ENCODE measurements at regions of chr1 and their contacts with region 1.

Region 1: DNA sequence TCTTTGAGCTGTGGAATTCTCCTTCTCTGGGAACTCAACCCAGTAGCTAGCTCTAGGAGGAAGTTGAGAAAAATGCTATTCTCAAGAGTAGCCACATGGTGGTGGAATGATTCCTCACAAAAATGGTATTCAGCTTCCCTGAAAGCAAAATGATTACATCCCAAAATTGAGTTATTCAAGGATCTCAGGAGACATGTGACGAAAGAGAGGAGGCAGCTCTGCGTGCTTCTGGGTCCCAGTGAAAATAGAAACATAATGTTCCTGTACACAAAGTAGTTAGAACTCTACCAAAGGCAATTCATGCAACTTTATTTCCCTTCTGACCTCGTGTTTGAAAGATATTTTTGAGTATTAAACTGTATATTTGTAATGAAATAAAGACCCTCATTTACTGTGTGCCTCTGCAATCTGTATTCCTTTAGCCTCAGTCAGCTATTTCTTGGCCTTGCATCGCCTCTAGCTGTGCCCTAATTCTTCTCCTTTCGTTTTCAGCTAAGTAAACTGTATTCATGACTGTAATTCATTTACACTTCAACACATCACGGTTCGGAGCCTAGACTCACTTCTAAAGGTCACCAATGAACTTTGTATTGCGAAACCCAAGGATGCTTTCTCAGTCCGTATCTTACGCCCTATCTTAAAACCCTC is 167.3 kb downstream of the FASLG start:
- DNase-seq: peak in 1 of 2 donors; percentile 23
- ATAC-seq: peak in 7 of 8 donors; percentile 79 to 93 (median 85)
- H3K4me3 ChIP-seq: peak overlapping the region in 4 of 10 donors; percentile 13 to 32 (median 22)
- H3K27ac ChIP-seq: peak overlapping the region; percentile 9 to 66 (median 55)
- H3K4me1 ChIP-seq: peaks cover 0 to 33% (median 7%) of the 10 kb centered on the region in 9 donors
- H3K27me3 ChIP-seq: no peaks in the 10 kb centered on the region
- CTCF ChIP-seq: peak; percentile 36 to 77 (median 66)

Region 2: GRCh38 chr1:172745014-172745413 is 81.2 kb before region 1 on chr1:
- intact Hi-C with region 1: loop called in 2 of 10 experiments (anchors 5 to 10 kb)
- DNase-seq: peak in 1 of 2 donors; percentile 33
- ATAC-seq: peak in 7 of 8 donors; percentile 56 to 81 (median 77)
- H3K4me3 ChIP-seq: no peak overlapping the region
- H3K27ac ChIP-seq: no peak overlapping the region
- H3K4me1 ChIP-seq: peaks cover 0 to 26% (median 5%) of the 10 kb centered on the region in 9 donors
- H3K27me3 ChIP-seq: peaks cover 0 to 11% (median 0%) of the 10 kb centered on the region in 7 donors
- CTCF ChIP-seq: peak in 8 of 9 donors; percentile 20 to 73 (median 58)

Region 3: DNA sequence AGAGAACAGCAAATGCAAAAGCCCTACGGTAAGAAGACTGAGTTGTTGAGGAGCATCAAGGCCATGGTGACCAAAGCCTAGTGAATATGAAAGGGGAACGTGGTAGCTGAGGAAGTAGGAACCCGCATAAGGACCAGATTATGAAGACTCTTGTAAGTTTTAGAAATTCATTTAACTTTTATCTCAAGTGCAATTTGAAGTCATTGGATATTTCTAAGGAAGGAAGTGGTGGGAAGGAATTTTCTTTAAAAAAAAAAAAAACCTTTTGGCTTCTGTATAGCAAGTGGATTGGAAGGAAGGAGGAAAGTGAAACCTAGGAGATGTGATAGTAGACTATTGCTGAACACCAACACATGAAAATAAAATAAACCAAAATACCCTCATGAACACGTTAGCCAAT is 105.5 kb after region 1 on chr1:
- intact Hi-C with region 1: loop called in 1 of 10 experiments (anchors 5 kb)
- DNase-seq: no peak
- ATAC-seq: no peak
- H3K4me3 ChIP-seq: no peak overlapping the region
- H3K27ac ChIP-seq: no peak overlapping the region
- H3K4me1 ChIP-seq: peaks cover 0 to 42% (median 14%) of the 10 kb centered on the region in 9 donors
- H3K27me3 ChIP-seq: no peaks in the 10 kb centered on the region
- CTCF ChIP-seq: no peak

Region 4: GRCh38 chr1:173202430-173203145 is 376.4 kb after region 1 on chr1:
- intact Hi-C with region 1: loop called (anchors 1 to 10 kb)
- DNase-seq: peak in 1 of 2 donors; percentile 56
- ATAC-seq: peak in 7 of 8 donors; percentile 66 to 79 (median 74)
- H3K4me3 ChIP-seq: no peak overlapping the region
- H3K27ac ChIP-seq: no peak overlapping the region
- H3K4me1 ChIP-seq: peaks cover 0 to 36% (median 12%) of the 10 kb centered on the region in 9 donors
- H3K27me3 ChIP-seq: no peaks in the 10 kb centered on the region
- CTCF ChIP-seq: peak; percentile 23 to 79 (median 69)

Region 5: GRCh38 chr1:173409613-173410012 is 583.4 kb after region 1 on chr1:
- intact Hi-C with region 1: loop called in 1 of 10 experiments (anchors 10 kb)
- DNase-seq: peak; percentile 37 to 42
- ATAC-seq: peak in 5 of 8 donors; percentile 63 to 75 (median 66)
- H3K4me3 ChIP-seq: no peak overlapping the region
- H3K27ac ChIP-seq: no peak overlapping the region
- H3K4me1 ChIP-seq: peaks cover 0 to 51% (median 26%) of the 10 kb centered on the region in 9 donors
- H3K27me3 ChIP-seq: no peaks in the 10 kb centered on the region
- CTCF ChIP-seq: no peak